AG04450 (cell line): ENCODE measurements at regions of chr10 and their contacts with region 1.

Region 1: DNA sequence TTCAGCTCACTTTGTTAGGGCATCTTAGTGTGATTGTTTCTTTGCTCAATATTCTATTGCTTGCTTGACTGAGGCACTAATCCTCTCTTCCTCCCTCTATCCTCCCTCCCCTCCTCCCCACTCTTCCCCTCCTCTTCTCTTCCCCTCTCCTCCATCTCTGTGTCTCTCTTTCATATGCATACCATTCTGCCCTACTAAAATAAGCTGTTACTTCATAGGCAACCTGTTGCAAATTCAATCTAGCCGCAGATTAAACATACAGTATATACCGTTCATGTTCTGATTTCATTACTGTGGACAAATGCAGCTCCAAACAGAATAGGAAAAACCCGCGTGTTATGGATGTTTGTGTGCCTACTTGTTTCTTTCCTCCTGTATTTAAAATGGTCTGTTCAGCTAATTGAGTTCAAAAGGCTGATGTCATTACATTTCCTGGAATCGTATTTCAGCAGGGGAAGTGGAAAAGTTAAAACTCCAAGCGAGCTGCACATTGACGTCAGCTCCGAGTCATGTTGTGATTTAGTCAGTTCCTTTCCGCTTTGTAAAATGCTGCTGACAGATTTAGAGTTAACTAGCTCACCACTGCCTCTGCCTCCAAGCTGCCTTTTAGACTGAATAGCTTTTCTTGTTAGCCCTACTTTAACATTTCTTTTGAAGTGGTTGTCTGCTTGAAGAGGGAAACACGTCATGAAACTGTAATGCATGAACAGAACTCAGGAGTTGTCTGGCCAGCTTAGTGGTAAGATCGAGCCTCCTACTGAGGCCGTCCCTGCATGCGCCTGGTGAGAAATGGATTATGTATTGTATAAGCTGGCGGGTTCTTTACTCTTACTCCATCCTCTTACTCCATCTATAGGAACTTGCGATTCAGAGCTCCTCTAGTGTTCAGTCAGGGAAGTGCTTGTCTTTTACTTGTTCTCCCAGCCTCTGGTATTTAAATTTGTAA is 69.0 kb downstream of the CREM start:
- DNase-seq: peak; percentile 89
- H3K4me3 ChIP-seq: peak overlapping the region; percentile 56
- H3K27ac ChIP-seq: peak overlapping the region; percentile 98
- H3K27me3 ChIP-seq: no peaks in the 10 kb centered on the region
- CTCF ChIP-seq: peak; percentile 87

Region 2: DNA sequence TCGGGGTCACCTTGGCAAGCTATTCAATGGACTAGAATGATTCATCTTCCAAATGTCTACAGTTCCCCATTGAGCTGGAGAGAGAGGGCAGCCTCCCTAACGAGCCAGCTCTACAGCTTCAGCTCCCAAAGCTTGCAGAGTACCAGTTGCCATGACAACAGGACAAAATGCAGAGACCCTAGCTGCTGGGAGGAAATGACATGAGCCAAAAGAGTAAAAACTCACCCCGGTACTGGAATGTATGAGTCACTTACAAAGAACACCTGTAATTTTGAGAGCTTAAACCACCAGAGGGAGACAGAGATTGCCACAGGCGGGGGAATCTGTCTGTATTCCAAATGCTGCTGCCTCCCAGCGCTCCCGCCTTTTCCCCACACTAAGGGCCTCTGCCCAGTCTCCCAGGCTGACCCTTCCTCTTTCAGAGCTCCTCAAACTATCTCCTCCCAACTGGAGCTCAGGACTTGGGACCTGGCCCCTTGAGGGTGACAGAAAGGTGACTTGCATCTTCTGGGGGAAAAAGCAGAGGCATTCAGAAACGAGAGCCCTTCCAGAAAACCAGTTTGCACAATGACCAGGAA is 201.0 kb before region 1 on chr10:
- CTCF ChIA-PET with region 1: interaction called, 10 read pairs
- POLR2A ChIA-PET with region 1: no interaction called
- DNase-seq: peak; percentile 37
- H3K4me3 ChIP-seq: no peak overlapping the region
- H3K27ac ChIP-seq: no peak overlapping the region
- H3K27me3 ChIP-seq: no peaks in the 10 kb centered on the region
- CTCF ChIP-seq: peak; percentile 77

Region 3: GRCh38 chr10:35058134-35058533 is 137.5 kb before region 1 on chr10:
- CTCF ChIA-PET with region 1: no interaction called
- POLR2A ChIA-PET with region 1: no interaction called
- DNase-seq: peak; percentile 64
- H3K4me3 ChIP-seq: no peak overlapping the region
- H3K27ac ChIP-seq: peak overlapping the region; percentile 83
- H3K27me3 ChIP-seq: no peaks in the 10 kb centered on the region
- CTCF ChIP-seq: no peak

Region 4: GRCh38 chr10:35126530-35127296 is 68.9 kb before region 1 on chr10 and contains the start of gene CREM:
- CTCF ChIA-PET with region 1: interaction called, 68 read pairs
- POLR2A ChIA-PET with region 1: interaction called, 43 read pairs
- DNase-seq: peak; percentile 90
- H3K4me3 ChIP-seq: peak within 1 kb of the TSS; percentile 82
- H3K27ac ChIP-seq: peak within 1 kb of the TSS; percentile 99
- H3K27me3 ChIP-seq: no peaks in the 10 kb centered on the region
- CTCF ChIP-seq: peak; percentile 72
- polyA plus RNA-seq, gene CREM: 37.9 and 48.2 TPM in 2 replicates

Region 5: DNA sequence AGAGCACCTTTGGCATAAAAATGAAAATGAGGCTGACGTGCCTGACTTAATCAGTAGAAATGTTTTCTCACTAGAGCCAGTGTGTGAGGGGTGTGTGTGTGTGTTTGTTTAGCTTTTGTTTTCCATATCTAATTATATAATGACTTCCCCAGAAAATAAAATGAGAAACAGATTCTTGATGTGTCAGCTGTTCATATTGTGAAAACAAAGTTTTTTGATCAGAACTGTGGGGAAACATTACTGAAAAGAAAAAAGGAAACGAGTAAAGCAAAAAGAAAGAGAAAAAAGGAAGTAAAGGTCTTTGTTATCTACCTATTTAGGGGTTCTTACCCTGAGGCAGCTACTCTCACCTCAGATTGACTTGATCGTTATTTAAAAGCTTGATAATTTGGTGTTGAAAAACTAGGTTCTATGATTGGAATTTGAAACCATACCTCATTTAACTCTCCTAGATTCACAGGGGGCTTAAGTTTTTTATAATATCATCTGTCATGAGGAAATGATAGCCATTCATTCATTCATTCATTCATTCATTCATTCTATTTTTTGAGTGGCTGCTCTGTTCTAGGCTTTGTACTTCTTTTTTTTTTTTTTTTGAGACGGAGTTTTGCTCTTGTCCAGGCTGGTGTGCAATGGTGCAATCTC is 11.0 kb before region 1 on chr10:
- CTCF ChIA-PET with region 1: interaction called, 14 read pairs
- POLR2A ChIA-PET with region 1: no interaction called
- DNase-seq: no peak
- H3K4me3 ChIP-seq: no peak overlapping the region
- H3K27ac ChIP-seq: no peak overlapping the region
- H3K27me3 ChIP-seq: no peaks in the 10 kb centered on the region
- CTCF ChIP-seq: no peak

Region 6: DNA sequence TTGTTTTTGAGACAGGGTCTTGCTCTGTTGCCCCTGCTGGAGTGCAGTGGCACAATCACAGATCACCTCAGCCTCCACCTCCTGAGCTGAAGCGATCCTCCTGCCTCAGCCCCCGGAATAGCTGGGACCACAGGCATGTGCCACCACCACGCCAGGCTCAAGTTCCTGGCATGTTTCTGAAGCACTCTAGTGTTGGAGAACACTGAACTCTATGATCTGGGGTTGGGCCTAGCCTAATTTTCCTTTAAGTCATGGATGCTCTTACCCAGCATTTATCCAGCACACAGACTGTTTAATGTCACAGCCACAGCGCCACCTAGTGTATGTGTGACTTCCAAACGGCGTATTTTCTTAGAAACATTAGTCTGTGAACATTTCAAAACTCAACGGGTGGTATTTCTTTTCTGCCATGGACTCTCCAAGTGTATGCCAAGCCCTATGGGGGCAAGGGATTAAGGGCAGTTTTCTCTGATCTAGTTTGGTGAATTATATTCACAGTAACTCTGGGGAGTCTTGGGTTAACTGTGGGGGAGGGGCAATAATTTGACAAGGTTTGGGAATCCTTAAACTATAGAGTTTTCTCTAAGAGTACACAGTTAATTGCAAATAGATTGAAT is 22.8 kb after region 1 on chr10:
- CTCF ChIA-PET with region 1: interaction called, 26 read pairs
- POLR2A ChIA-PET with region 1: interaction called, 4 read pairs
- DNase-seq: peak; percentile 74
- H3K4me3 ChIP-seq: 0 out of 2 replicates have a peak overlapping the region, but pooled peaks have one; percentile 7
- H3K27ac ChIP-seq: no peak overlapping the region
- H3K27me3 ChIP-seq: no peaks in the 10 kb centered on the region
- CTCF ChIP-seq: peak; percentile 83